ENCODE measurements at regions of chr19 and their contacts with region 1.

Region 1: GRCh38 chr19:42176990-42177685 is 40.3 kb downstream of the DEDD2 start:
- H3K4me3 ChIP-seq: peak overlapping the region; percentile 27; the same call in 1 of the 2 replicates
- H3K27ac ChIP-seq: no peak overlapping the region
- H3K4me1 ChIP-seq: peaks cover 10% of the 10 kb centered on the region
- CTCF ChIP-seq: 0 out of 2 replicates have a peak, but pooled peaks have one; percentile 45

Region 2: DNA sequence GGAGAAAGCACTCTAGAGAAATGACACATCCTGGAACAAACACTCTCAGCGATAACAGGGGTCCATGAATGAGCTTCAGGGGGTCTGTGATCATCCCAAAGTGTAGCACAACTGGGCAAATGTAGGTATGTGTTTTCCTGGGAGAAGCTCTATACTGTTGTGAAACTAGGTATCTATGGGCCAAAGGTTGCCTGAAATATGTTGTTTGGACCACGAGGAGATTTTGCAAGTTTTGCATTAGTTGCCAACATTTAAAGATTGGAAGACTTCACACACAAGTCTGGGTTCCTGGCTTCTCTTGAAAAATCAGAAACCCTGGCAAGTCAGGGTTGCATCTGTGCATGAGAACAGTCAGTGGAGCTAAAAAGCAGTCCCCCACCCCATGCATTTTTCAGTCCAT is 18.2 kb before region 1 on chr19:
- CTCF ChIA-PET with region 1: interaction called, 11 read pairs
- POLR2A ChIA-PET with region 1: no interaction called
- H3K4me3 ChIP-seq: no peak overlapping the region
- H3K27ac ChIP-seq: no peak overlapping the region
- H3K4me1 ChIP-seq: no peaks in the 10 kb centered on the region
- CTCF ChIP-seq: no peak

Measured in HEK293 (cell line).